ENCODE measurements at regions of chr16 and their contacts with region 1.

Region 1: GRCh38 chr16:3530371-3530914 is 29.6 kb downstream of the CLUAP1 start:
- DNase-seq: no peak
- ATAC-seq: no peak
- H3K4me3 ChIP-seq: no peak overlapping the region
- H3K4me3 Mint-ChIP-seq: no peak overlapping the region
- H3K27ac ChIP-seq: no peak overlapping the region
- H3K27ac Mint-ChIP-seq: no peak overlapping the region
- H3K4me1 ChIP-seq: peaks cover 3% of the 10 kb centered on the region
- H3K4me1 Mint-ChIP-seq: peaks cover 5% of the 10 kb centered on the region
- H3K27me3 ChIP-seq: no peaks in the 10 kb centered on the region
- H3K27me3 Mint-ChIP-seq: no peaks in the 10 kb centered on the region
- CTCF ChIP-seq: no peak

Region 2: DNA sequence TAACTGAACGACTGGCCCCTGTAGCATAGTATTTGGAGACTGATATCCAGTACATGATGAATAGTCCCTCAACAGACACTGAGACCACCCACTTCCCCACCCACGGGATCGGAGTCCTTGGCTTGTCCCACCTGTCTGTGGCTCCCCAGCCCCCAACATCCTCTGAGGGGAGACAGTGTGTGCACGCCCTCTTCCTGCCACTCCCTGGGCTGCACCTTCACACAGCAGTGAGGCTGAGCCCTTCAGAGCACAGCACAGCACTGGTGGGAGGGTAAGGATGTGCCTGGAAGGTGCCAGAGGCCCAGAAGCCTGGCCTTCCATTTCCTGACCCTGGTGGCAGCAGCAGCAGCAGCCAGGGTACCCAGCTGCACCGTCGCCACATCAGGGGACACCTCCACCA is 135.1 kb after region 1 on chr16:
- CTCF ChIA-PET with region 1: no interaction called
- POLR2A ChIA-PET with region 1: no interaction called
- intact Hi-C with region 1: loop called (anchors 1 to 2 kb)
- DNase-seq: peak; percentile 10 to 64 (median 38)
- ATAC-seq: peak; percentile 100
- H3K4me3 ChIP-seq: no peak overlapping the region
- H3K4me3 Mint-ChIP-seq: no peak overlapping the region
- H3K27ac ChIP-seq: peak overlapping the region; percentile 0 to 9
- H3K27ac Mint-ChIP-seq: peak overlapping the region; percentile 61
- H3K4me1 ChIP-seq: peaks cover 15% of the 10 kb centered on the region
- H3K4me1 Mint-ChIP-seq: peaks cover 20% of the 10 kb centered on the region
- H3K27me3 ChIP-seq: no peaks in the 10 kb centered on the region
- H3K27me3 Mint-ChIP-seq: no peaks in the 10 kb centered on the region
- CTCF ChIP-seq: peak; percentile 39